Natural killer cell (primary cell): ENCODE measurements at regions of chr11 and their contacts with region 1.

Region 1: DNA sequence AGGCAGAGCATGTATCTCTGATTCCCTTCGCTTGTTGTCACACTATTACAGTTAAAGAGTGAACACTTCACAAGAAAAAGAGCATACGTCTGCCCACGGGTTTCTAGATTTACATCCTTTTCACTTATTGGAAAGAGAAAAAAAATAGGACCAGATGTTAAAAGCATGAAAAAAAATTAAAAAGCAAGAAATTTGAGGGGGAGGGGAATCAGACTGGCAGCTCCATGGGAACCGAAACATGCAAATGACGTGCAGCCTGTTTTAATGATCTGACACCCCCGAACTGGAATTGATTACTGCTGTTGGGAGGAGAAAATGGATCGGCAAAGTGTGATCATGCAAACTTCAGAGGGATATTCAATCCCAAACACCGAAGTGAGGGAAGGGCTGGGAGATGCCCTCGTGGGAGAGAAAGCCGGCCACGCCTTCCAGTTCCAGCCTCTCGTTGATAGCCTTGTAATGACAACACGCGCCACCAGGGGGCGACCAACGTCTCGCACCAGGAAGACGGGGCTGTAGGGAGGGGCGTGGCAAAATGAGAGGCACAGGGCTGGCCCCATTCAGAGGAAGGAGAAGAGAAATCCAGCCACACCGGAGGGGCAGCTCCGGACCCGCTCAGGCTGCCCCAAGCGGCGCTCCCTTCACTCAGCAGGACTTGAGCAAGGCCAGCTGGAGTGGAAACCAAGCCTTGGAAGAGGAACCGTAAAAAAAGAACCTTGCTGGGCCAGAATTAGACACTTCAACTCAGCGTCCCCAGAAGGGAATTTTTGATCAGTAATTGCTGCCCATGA is 53.8 kb upstream of the SYT13 start:
- DNase-seq: peak; percentile 88 to 95
- ATAC-seq: peak; percentile 98 to 100 (median 100)
- H3K4me3 ChIP-seq: no peak overlapping the region
- H3K4me3 Mint-ChIP-seq: peak overlapping the region; percentile 40
- H3K27ac ChIP-seq: no peak overlapping the region
- H3K27ac Mint-ChIP-seq: peak overlapping the region in 1 of 2 donors; percentile 8
- H3K4me1 ChIP-seq: peaks cover 8% of the 10 kb centered on the region
- H3K4me1 Mint-ChIP-seq: peaks cover 10 to 12% of the 10 kb centered on the region in 2 donors
- H3K27me3 ChIP-seq: peaks cover 6% of the 10 kb centered on the region
- H3K27me3 Mint-ChIP-seq: peaks cover 26 to 37% of the 10 kb centered on the region in 2 donors
- CTCF ChIP-seq: peak; percentile 95

Region 2: GRCh38 chr11:45354976-45355705 is 15.2 kb after region 1 on chr11:
- intact Hi-C with region 1: loop called (anchors 1 kb)
- DNase-seq: peak; percentile 83 to 95
- ATAC-seq: peak; percentile 89 to 98 (median 96)
- H3K4me3 ChIP-seq: peak overlapping the region; percentile 71
- H3K4me3 Mint-ChIP-seq: peak overlapping the region; percentile 83
- H3K27ac ChIP-seq: peak overlapping the region; percentile 67
- H3K27ac Mint-ChIP-seq: peak overlapping the region; percentile 61 to 78
- H3K4me1 ChIP-seq: peaks cover 14% of the 10 kb centered on the region
- H3K4me1 Mint-ChIP-seq: no peaks in the 10 kb centered on the region
- H3K27me3 ChIP-seq: no peaks in the 10 kb centered on the region
- H3K27me3 Mint-ChIP-seq: peaks cover 11 to 28% of the 10 kb centered on the region in 2 donors
- CTCF ChIP-seq: no peak

Region 3: GRCh38 chr11:45676522-45677095 is 336.7 kb after region 1 on chr11:
- intact Hi-C with region 1: no loop called
- DNase-seq: no peak
- ATAC-seq: no peak
- H3K4me3 ChIP-seq: no peak overlapping the region
- H3K4me3 Mint-ChIP-seq: no peak overlapping the region
- H3K27ac ChIP-seq: no peak overlapping the region
- H3K27ac Mint-ChIP-seq: no peak overlapping the region
- H3K4me1 ChIP-seq: no peaks in the 10 kb centered on the region
- H3K4me1 Mint-ChIP-seq: no peaks in the 10 kb centered on the region
- H3K27me3 ChIP-seq: no peaks in the 10 kb centered on the region
- H3K27me3 Mint-ChIP-seq: no peaks in the 10 kb centered on the region
- CTCF ChIP-seq: no peak

Region 4: GRCh38 chr11:45771566-45772448 is 431.9 kb after region 1 on chr11:
- intact Hi-C with region 1: loop called (anchors 5 kb)
- DNase-seq: peak; percentile 71 to 88
- ATAC-seq: peak; percentile 86 to 89 (median 89)
- H3K4me3 ChIP-seq: peak overlapping the region; percentile 46
- H3K4me3 Mint-ChIP-seq: peak overlapping the region; percentile 99
- H3K27ac ChIP-seq: peak overlapping the region; percentile 51
- H3K27ac Mint-ChIP-seq: peak overlapping the region; percentile 83 to 88
- H3K4me1 ChIP-seq: peaks cover 9% of the 10 kb centered on the region
- H3K4me1 Mint-ChIP-seq: peaks cover 15% of the 10 kb centered on the region in 2 donors
- H3K27me3 ChIP-seq: no peaks in the 10 kb centered on the region
- H3K27me3 Mint-ChIP-seq: peaks cover 0 to 4% of the 10 kb centered on the region in 2 donors
- CTCF ChIP-seq: peak; percentile 78

Region 5: DNA sequence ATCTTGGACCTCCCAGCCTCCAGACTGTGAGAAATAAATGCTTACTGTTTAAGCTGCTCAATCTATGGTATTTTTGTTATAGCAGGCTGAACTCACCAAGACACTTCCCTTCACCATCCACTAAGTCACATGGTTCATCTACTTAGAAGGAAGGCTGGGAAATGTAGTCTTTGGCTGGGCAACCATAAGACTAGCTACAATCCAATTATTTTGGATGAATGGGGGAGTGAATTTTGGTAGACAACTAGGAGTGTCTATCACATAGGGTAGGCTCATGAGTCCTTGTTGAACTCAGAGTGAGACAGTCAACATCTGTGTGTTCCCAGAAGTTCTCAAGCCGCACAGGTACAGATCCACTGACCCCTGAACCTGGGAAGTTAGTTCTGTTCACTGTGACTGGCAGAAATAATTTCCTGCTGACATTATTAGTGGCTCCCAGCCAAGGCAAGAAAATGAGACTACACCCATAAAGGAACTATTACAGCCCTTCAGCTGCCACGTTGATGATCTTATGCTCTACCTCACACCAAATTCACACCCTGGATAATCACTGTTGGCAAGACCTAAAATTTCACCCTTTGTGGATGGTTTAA is 461.9 kb after region 1 on chr11:
- intact Hi-C with region 1: no loop called
- DNase-seq: peak in 1 of 2 donors; percentile 38
- ATAC-seq: no peak
- H3K4me3 ChIP-seq: no peak overlapping the region
- H3K4me3 Mint-ChIP-seq: no peak overlapping the region
- H3K27ac ChIP-seq: no peak overlapping the region
- H3K27ac Mint-ChIP-seq: no peak overlapping the region
- H3K4me1 ChIP-seq: peaks cover 21% of the 10 kb centered on the region
- H3K4me1 Mint-ChIP-seq: peaks cover 11 to 23% of the 10 kb centered on the region in 2 donors
- H3K27me3 ChIP-seq: no peaks in the 10 kb centered on the region
- H3K27me3 Mint-ChIP-seq: peaks cover 0 to 3% of the 10 kb centered on the region in 2 donors
- CTCF ChIP-seq: no peak